Activated B cell treated with CpG ODN at 0.5 μM for 24 hours (primary cell): ENCODE measurements at regions of chr12 and their contacts with region 1.

Region 1: GRCh38 chr12:751192-751998 is 984 bp upstream of the WNK1 start:
- DNase-seq: peak; percentile 78
- ATAC-seq: peak; percentile 47
- H3K4me3 Mint-ChIP-seq: no peak overlapping the region
- H3K27ac Mint-ChIP-seq: no peak overlapping the region
- H3K4me1 Mint-ChIP-seq: peaks cover 24% of the 10 kb centered on the region
- H3K27me3 Mint-ChIP-seq: no peaks in the 10 kb centered on the region
- CTCF ChIP-seq: no peak

Region 2: GRCh38 chr12:575948-576612 is 175.3 kb before region 1 on chr12:
- CTCF ChIA-PET with region 1: interaction called, 42 read pairs
- POLR2A ChIA-PET with region 1: interaction called, 39 read pairs
- intact Hi-C with region 1: loop called (anchors 1 kb)
- DNase-seq: peak; percentile 91
- ATAC-seq: peak; percentile 99
- H3K4me3 Mint-ChIP-seq: peak overlapping the region; percentile 75
- H3K27ac Mint-ChIP-seq: no peak overlapping the region
- H3K4me1 Mint-ChIP-seq: peaks cover 11% of the 10 kb centered on the region
- H3K27me3 Mint-ChIP-seq: no peaks in the 10 kb centered on the region
- CTCF ChIP-seq: peak; percentile 70

Region 3: GRCh38 chr12:642633-643474 is 108.5 kb before region 1 on chr12:
- CTCF ChIA-PET with region 1: interaction called, 28 read pairs
- POLR2A ChIA-PET with region 1: interaction called, 93 read pairs
- intact Hi-C with region 1: loop called (anchors 1 kb)
- DNase-seq: peak; percentile 77
- ATAC-seq: peak; percentile 72
- H3K4me3 Mint-ChIP-seq: peak overlapping the region; percentile 91
- H3K27ac Mint-ChIP-seq: peak overlapping the region; percentile 96
- H3K4me1 Mint-ChIP-seq: peaks cover 47% of the 10 kb centered on the region
- H3K27me3 Mint-ChIP-seq: no peaks in the 10 kb centered on the region
- CTCF ChIP-seq: no peak

Region 4: DNA sequence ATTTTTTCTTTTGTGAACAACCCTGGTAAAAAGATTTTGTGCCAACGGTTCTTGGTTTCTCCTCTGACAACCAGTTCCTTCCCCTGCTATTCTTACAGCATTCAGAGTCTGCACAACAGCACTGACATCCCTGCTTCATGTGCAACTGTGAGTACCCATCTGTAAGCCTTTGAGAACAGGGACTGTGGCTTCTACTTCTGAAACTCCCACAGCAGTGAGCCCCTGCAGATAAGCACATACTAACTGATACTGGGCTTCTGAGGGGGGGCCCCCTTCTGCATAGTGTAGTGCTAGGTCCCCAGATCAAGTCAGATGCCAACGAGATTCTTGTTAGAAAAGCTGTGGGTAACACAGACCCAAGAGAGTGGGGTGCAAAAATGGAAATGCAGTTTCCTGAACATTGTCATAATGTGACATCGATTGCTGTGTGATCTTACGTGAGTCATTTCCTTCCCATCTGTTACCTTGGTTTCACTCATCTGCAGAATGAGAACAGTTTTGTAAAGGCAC is 77.1 kb before region 1 on chr12:
- CTCF ChIA-PET with region 1: interaction called, 30 read pairs
- POLR2A ChIA-PET with region 1: interaction called, 73 read pairs
- intact Hi-C with region 1: loop called (anchors 1 kb)
- DNase-seq: peak; percentile 45
- ATAC-seq: peak; percentile 86
- H3K4me3 Mint-ChIP-seq: peak overlapping the region; percentile 79
- H3K27ac Mint-ChIP-seq: peak overlapping the region; percentile 96
- H3K4me1 Mint-ChIP-seq: peaks cover 53% of the 10 kb centered on the region
- H3K27me3 Mint-ChIP-seq: no peaks in the 10 kb centered on the region
- CTCF ChIP-seq: no peak

Region 5: DNA sequence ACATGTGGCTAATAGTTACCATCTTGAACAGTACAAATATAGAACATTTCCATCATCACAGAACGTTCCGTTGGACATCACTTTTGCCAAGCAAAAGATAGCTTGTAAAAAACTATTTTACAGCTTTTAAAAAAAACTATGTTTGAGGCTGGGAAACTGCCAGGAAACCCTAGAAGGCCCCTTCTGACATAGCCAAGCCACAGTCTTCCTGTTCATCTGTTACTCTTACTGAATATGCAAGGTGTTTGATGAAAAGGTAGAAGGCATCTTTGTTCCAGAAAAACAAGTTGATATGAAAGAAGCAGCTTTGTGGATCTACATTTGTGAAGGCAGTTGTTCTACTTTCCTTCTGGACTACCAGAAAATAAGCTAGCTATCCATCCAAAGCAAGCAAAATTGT is 22.6 kb before region 1 on chr12:
- CTCF ChIA-PET with region 1: interaction called, 3 read pairs
- POLR2A ChIA-PET with region 1: interaction called, 14 read pairs
- intact Hi-C with region 1: no loop called
- DNase-seq: no peak
- ATAC-seq: no peak
- H3K4me3 Mint-ChIP-seq: no peak overlapping the region
- H3K27ac Mint-ChIP-seq: no peak overlapping the region
- H3K4me1 Mint-ChIP-seq: peaks cover 9% of the 10 kb centered on the region
- H3K27me3 Mint-ChIP-seq: no peaks in the 10 kb centered on the region
- CTCF ChIP-seq: no peak

Region 6: DNA sequence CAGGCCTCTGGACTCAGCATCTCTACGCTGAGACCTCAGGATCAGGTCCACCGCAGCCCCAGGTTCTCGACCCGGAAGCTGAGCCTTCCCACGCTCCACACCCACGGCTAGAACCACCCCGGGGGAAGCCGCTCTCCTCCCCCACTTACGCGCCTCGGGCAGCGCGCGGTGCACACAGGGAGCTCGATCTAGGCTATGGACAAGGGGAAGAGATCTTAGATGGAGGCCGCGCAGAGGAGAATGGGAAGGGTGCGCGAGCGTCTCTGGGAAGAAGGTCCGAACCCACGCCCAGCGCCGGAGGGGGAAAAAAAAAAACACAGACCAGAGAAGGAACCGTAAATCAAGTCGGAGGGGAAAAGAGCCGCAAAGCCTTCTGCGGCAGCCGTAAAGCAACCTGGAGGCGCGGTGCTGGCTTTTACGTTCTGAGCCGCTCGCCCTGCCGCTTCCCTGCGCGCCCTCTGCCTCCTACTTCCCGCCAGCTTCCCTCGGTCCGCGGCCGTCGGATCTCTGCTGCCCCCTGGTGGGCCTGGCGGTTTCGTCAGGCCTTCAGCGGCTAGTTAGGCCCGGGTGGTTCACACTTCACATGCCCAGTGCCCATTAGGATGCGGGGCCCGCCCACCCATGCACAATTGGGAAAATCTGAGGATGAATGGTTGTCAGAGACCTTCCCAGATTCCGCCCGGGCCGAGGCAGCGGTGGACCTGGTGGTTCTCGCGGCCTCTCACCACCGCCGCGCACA is 198.2 kb after region 1 on chr12 and contains the start of gene RAD52:
- CTCF ChIA-PET with region 1: no interaction called
- POLR2A ChIA-PET with region 1: interaction called, 7 read pairs
- intact Hi-C with region 1: loop called (anchors 1 kb)
- DNase-seq: peak; percentile 97
- ATAC-seq: peak; percentile 85
- H3K4me3 Mint-ChIP-seq: peak within 1 kb of the TSS; percentile 99
- H3K27ac Mint-ChIP-seq: peak within 1 kb of the TSS; percentile 96
- H3K4me1 Mint-ChIP-seq: peaks cover 26% of the 10 kb centered on the region
- H3K27me3 Mint-ChIP-seq: no peaks in the 10 kb centered on the region
- CTCF ChIP-seq: peak; percentile 65
- total RNA-seq, gene RAD52: 15.0 and 15.2 TPM in 2 replicates